Activated T-helper 1 cell treated with anti-CD3 and anti-CD28 coated beads, Interleukin-12 subunit alpha, Interleukin-12 subunit beta, Interleukin-2, Interleukin-4 antibody, amounts not matched to agents 30 ng/mL and 10 ng/mL and 1 ng/mL, durations not matched to agents 14 hours and 24 hours and 36 hours (primary cell): ENCODE measurements at regions of chr7 and their contacts with region 1.

Region 1: GRCh38 chr7:152025077-152025936 is at the start of gene GALNT11:
- DNase-seq: peak; percentile 88
- H3K4me3 Mint-ChIP-seq: peak within 1 kb of the TSS; percentile 85
- H3K27ac Mint-ChIP-seq: peak within 1 kb of the TSS; percentile 86
- H3K4me1 Mint-ChIP-seq: peaks cover 26% of the 10 kb centered on the region
- H3K27me3 Mint-ChIP-seq: peaks cover 10% of the 10 kb centered on the region
- total RNA-seq, gene GALNT11: 20.5 and 21.2 TPM in 2 replicates

Region 2: GRCh38 chr7:151519765-151520418 is 505.4 kb before region 1 on chr7 and contains the start of gene RHEB:
- intact Hi-C with region 1: loop called (anchors 2 kb)
- DNase-seq: peak; percentile 97
- H3K4me3 Mint-ChIP-seq: peak within 1 kb of the TSS; percentile 94
- H3K27ac Mint-ChIP-seq: peak within 1 kb of the TSS; percentile 99
- H3K4me1 Mint-ChIP-seq: peaks cover 32% of the 10 kb centered on the region
- H3K27me3 Mint-ChIP-seq: peaks cover 10% of the 10 kb centered on the region
- total RNA-seq, gene RHEB: 62.5 and 65.5 TPM in 2 replicates

Region 3: DNA sequence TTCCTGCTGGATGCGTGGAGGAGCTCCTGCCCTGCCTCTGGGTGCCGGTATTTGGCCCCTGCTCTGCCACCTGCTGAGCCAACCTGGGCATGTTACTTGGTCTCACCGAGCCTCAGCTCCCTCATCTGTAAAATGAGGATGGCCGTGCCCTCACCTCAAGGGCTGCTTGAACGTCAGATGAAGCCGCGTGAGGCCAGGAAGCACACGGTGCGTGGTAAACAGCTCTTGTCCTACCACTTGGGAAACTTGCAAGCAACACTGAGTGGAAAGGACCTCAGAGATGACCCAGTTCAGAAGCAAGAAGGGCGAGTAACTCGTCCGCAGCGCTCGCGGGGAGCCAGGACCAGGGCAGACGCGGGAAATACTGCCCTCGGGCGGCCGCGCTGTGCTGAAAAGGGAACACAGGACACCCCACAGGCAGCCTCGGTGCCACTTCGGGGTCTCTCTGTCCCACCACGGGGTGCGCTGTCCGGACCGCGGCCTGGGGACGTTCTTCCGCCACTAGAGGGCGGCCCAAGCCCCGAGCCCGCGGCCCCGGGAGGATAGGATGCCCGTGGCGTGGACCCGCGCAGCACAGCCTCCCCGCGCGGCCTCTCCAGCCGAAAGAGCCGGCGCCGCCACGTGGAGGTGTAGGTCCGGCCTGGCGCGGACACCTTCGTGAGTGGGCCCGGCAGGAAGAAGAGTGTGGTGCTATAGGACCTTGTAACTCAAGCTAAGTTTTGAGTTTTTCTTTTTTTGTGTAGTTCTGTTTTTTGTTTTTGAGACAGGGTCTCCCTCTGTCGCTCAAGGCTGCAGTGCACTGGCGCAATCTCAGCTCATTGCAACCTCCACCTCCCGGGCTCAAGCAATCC is 242.5 kb before region 1 on chr7:
- intact Hi-C with region 1: loop called (anchors 5 kb)
- DNase-seq: peak; percentile 41
- H3K4me3 Mint-ChIP-seq: peak overlapping the region; percentile 56
- H3K27ac Mint-ChIP-seq: peak overlapping the region; percentile 29
- H3K4me1 Mint-ChIP-seq: peaks cover 5% of the 10 kb centered on the region
- H3K27me3 Mint-ChIP-seq: peaks cover 8% of the 10 kb centered on the region

Region 4: DNA sequence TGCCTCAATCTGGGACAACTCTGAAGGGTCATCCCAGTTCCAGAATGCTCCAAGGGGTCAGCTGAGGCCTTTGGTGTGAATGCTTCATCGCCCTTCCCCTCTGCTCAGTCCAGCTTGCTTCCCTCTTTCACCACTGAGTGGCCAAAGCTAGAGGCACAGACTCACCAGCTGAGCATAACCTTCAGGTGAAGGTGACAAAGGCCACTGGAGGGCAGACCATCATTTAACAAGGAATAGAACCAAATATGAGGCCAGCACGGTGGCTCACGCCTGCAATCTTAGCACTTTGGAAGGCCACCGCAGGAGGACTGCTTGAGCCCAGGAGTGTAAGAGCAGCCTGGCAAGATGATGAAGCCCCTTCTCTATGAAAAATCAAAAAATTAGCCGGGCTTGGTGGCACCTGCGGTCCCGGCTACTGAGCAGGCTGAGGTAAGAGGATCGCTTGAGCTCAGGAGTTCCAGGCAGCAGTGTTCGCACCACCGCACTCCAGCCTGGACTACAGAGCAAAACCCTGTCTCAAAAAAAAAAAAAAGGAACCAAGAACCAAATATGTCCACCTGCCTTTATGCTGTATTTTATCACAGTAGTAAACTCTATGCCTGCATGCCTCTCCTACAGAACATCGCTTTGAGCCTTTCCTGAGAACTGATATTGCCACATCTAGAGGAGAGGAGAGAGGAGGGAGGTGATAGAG is 161.8 kb before region 1 on chr7:
- intact Hi-C with region 1: no loop called
- DNase-seq: no peak
- H3K4me3 Mint-ChIP-seq: no peak overlapping the region
- H3K27ac Mint-ChIP-seq: no peak overlapping the region
- H3K4me1 Mint-ChIP-seq: no peaks in the 10 kb centered on the region
- H3K27me3 Mint-ChIP-seq: no peaks in the 10 kb centered on the region

Region 5: DNA sequence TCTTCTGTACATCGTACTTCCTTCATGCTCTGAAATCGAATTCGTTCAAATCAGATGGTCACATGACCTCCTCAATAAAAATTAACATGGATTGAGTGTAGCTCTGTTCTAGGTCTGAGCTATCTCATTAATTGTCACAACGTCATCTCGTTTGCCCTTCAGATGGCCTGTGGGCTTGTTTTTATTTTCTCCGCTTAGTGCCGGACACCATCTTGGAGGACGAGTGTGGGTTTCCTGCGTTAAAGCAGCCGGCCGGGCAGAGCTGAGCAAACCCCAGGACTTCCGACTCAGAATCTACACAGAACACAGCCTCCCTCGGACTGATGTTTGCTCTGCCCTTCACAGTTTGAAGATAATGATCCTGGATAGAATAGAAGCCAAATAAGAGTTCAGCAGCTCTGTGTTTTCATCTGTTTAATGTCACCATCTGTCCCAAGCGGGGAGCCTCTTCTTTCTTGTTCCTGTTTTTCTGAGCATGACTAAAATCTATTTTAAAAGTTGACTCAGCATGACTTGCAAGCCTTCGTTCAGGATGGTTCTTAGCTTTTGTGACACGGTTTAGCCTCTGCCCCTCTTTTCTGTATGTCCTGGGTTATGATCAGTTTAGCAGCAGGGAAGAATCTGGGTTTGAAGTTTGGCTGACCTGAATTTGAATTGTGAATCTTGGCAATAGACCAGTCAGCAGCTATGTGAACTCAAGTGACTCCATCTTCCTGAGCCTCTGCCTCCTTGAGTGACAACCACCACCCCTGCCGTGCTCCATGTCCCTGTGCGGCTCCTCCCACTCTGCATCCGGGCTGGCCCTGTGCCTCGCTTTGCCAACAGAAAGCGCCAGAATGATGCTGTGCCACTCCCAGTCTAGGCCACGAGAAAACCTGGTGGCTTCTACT is 99.6 kb before region 1 on chr7:
- intact Hi-C with region 1: no loop called
- DNase-seq: no peak
- H3K4me3 Mint-ChIP-seq: no peak overlapping the region
- H3K27ac Mint-ChIP-seq: no peak overlapping the region
- H3K4me1 Mint-ChIP-seq: peaks cover 9% of the 10 kb centered on the region
- H3K27me3 Mint-ChIP-seq: peaks cover 13% of the 10 kb centered on the region

Region 6: GRCh38 chr7:151936207-151936606 is 89.1 kb before region 1 on chr7:
- intact Hi-C with region 1: loop called (anchors 5 kb)
- DNase-seq: no peak
- H3K4me3 Mint-ChIP-seq: peak overlapping the region; percentile 44
- H3K27ac Mint-ChIP-seq: peak overlapping the region; percentile 38
- H3K4me1 Mint-ChIP-seq: peaks cover 14% of the 10 kb centered on the region
- H3K27me3 Mint-ChIP-seq: peaks cover 42% of the 10 kb centered on the region

Region 7: GRCh38 chr7:152162287-152162686 is 137.0 kb after region 1 on chr7:
- intact Hi-C with region 1: no loop called
- DNase-seq: no peak
- H3K4me3 Mint-ChIP-seq: no peak overlapping the region
- H3K27ac Mint-ChIP-seq: no peak overlapping the region
- H3K4me1 Mint-ChIP-seq: peaks cover 10% of the 10 kb centered on the region
- H3K27me3 Mint-ChIP-seq: no peaks in the 10 kb centered on the region

Region 8: DNA sequence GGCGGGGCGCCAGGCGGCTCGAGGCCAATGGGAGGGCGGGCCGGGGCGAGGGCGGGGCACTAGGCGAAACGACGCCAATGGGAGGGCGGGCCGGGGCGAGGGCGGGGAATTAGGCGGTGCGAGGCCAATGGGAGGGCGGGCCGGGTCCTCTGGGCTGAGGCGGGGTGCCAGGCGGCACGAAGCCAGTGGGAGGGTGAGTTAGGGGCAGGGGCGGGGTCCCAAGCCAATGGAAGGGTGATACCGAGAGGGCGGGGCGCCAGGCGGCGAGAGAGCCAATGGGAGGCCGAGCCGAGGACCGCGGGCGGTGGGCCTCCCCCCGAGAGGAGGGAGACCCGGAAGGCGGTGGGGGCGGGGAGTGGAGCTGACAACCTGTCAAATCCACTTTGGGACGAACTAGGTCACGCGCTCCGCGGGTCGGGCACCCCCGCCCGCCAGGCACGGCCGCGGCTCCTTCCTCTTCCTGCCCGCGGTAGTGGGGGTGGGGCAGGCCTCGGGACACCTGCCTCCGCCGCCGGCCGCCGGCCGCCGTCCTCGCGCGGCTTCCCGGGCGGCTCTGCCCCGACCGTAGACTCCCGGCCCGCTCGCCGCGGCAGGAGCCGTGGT is 438.5 kb after region 1 on chr7:
- intact Hi-C with region 1: loop called (anchors 2 kb)
- DNase-seq: peak; percentile 100
- H3K4me3 Mint-ChIP-seq: peak overlapping the region; percentile 92
- H3K27ac Mint-ChIP-seq: no peak overlapping the region
- H3K4me1 Mint-ChIP-seq: peaks cover 10% of the 10 kb centered on the region
- H3K27me3 Mint-ChIP-seq: peaks cover 3% of the 10 kb centered on the region

Region 9: GRCh38 chr7:152759949-152760853 is 734.9 kb after region 1 on chr7:
- intact Hi-C with region 1: loop called (anchors 5 kb)
- DNase-seq: no peak
- H3K4me3 Mint-ChIP-seq: peak overlapping the region; percentile 86
- H3K27ac Mint-ChIP-seq: peak overlapping the region; percentile 80
- H3K4me1 Mint-ChIP-seq: peaks cover 21% of the 10 kb centered on the region
- H3K27me3 Mint-ChIP-seq: peaks cover 2% of the 10 kb centered on the region